Dorsolateral prefrontal cortex (tissue), 120 donors: ENCODE measurements at regions of chr2 and their contacts with region 1.

Region 1: GRCh38 chr2:160324161-160324800 is 124.2 kb upstream of the ITGB6 start:
- DNase-seq: peak in 2 of 10 donors; percentile 29 to 34
- H3K4me3 ChIP-seq: no peak overlapping the region
- H3K27ac ChIP-seq: no peak overlapping the region
- H3K27me3 ChIP-seq: no peaks in the 10 kb centered on the region
- CTCF ChIP-seq: peak; percentile 13 to 73 (median 56)

Region 2: GRCh38 chr2:160157861-160158829 is 166.1 kb before region 1 on chr2:
- intact Hi-C with region 1: no loop called
- DNase-seq: no peak
- H3K4me3 ChIP-seq: no peak overlapping the region
- H3K27ac ChIP-seq: no peak overlapping the region
- H3K27me3 ChIP-seq: no peaks in the 10 kb centered on the region
- CTCF ChIP-seq: no peak

Region 3: GRCh38 chr2:160301420-160301819 is 22.9 kb before region 1 on chr2:
- intact Hi-C with region 1: loop called in 1 of 2 experiments (anchors 2 kb)
- DNase-seq: no peak
- H3K4me3 ChIP-seq: no peak overlapping the region
- H3K27ac ChIP-seq: no peak overlapping the region
- H3K27me3 ChIP-seq: no peaks in the 10 kb centered on the region
- CTCF ChIP-seq: no peak

Region 4: DNA sequence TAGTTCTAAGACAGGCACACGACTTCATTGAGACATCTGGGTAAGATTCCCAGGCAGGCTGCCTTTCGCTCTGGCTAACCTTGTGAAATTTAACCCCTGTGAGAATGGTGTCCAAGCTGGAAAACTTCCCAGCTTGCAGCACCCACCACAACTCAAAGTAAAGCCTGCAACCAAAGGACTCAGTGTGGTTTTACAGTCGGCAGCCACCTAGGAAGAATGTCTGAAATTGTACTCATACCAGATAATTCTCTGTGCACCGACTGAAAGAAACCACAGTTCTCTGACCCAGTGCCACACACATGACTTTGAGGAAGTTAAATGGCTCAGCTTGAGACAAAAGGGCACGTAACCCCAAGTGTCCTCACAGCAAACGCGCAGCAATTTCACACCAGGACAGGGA is 43.6 kb after region 1 on chr2:
- intact Hi-C with region 1: no loop called
- DNase-seq: no peak
- H3K4me3 ChIP-seq: peak overlapping the region in 1 of 59 donors; percentile 11
- H3K27ac ChIP-seq: no peak overlapping the region
- H3K27me3 ChIP-seq: peaks cover 0 to 4% (median 0%) of the 10 kb centered on the region in 45 donors
- CTCF ChIP-seq: no peak

Region 5: DNA sequence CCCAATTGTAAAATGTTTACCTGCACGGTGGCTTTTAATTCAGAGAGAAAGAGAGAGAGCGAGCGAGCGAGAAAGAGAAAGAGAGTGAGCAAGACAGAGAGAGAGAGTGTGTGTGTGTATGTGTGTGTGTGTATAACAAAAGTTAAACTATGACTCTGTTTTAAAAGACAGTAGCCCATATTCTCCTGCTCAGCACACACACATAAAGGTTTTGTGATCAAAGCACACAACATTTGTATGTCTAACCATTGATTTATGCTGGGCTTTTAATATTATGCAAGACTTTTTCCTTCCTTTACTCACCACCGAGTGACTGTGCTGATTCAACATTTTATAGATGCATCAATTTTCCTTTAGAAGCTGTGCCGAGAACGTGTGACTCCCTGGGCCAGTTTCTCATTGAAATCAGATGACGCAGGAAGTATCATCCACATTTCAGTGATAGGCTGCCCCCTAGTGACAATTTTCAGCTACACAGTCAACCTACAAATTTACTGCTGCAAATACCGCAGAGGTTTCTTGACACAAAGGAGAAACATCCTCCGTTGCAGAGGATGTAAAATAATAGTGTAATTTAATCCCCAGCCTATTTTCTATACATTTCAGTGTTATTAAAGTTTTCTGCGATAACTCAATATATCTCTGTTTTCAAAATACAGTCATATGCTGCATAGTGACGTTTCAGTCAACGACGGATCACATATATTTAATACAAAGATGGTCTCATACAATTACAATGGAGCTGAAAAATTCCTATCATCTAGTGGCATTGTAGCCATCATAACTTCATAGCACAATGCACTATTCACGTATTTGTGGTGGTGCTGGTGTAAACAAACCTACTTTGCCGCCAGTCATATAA is 670.1 kb after region 1 on chr2:
- intact Hi-C with region 1: loop called in 1 of 2 experiments (anchors 10 kb)
- DNase-seq: peak in 7 of 10 donors; percentile 35 to 83 (median 53)
- H3K4me3 ChIP-seq: peak overlapping the region in 45 of 59 donors; percentile 3 to 51 (median 33)
- H3K27ac ChIP-seq: peak overlapping the region in 2 of 59 donors; percentile 3 to 27
- H3K27me3 ChIP-seq: no peaks in the 10 kb centered on the region
- CTCF ChIP-seq: peak; percentile 72 to 97 (median 90)